ENCODE measurements at regions of chr1 and their contacts with region 1.

Region 1: GRCh38 chr1:42335050-42335808 is at the start of gene FOXJ3:
- DNase-seq: peak; percentile 96
- ATAC-seq: peak; percentile 93
- H3K4me3 ChIP-seq: peak within 1 kb of the TSS; percentile 93
- H3K27ac ChIP-seq: peak within 1 kb of the TSS; percentile 82
- H3K4me1 ChIP-seq: no peaks in the 10 kb centered on the region
- H3K27me3 ChIP-seq: no peaks in the 10 kb centered on the region
- CTCF ChIP-seq: 0 out of 2 replicates have a peak, but pooled peaks have one; percentile 2
- POLR2A ChIP-seq: peak; percentile 72
- RAD21 ChIP-seq: peak; percentile 21; the same call in 1 of the 2 replicates
- total RNA-seq, gene FOXJ3: 28.1 and 30.5 TPM in 2 replicates

Region 2: GRCh38 chr1:41573785-41574713 is 761.2 kb before region 1 on chr1:
- CTCF ChIA-PET with region 1: no interaction called
- POLR2A ChIA-PET with region 1: no interaction called
- dilution Hi-C with region 1: no loop called
- in situ Hi-C with region 1: no loop called
- intact Hi-C with region 1: loop called (anchors 5 kb)
- DNase-seq: peak; percentile 80
- ATAC-seq: peak; percentile 99
- H3K4me3 ChIP-seq: no peak overlapping the region
- H3K27ac ChIP-seq: no peak overlapping the region
- H3K4me1 ChIP-seq: no peaks in the 10 kb centered on the region
- H3K27me3 ChIP-seq: no peaks in the 10 kb centered on the region
- CTCF ChIP-seq: peak; percentile 99
- POLR2A ChIP-seq: peak; percentile 57; the same call in 1 of the 2 replicates
- RAD21 ChIP-seq: peak; percentile 100

Region 3: GRCh38 chr1:42173155-42173933 is 161.9 kb before region 1 on chr1:
- CTCF ChIA-PET with region 1: interaction called, 4 read pairs
- POLR2A ChIA-PET with region 1: no interaction called
- dilution Hi-C with region 1: no loop called
- in situ Hi-C with region 1: no loop called
- intact Hi-C with region 1: loop called (anchors 1 kb)
- DNase-seq: peak; percentile 28
- ATAC-seq: peak; percentile 76
- H3K4me3 ChIP-seq: no peak overlapping the region
- H3K27ac ChIP-seq: no peak overlapping the region
- H3K4me1 ChIP-seq: peaks cover 5% of the 10 kb centered on the region
- H3K27me3 ChIP-seq: no peaks in the 10 kb centered on the region
- CTCF ChIP-seq: peak; percentile 79
- POLR2A ChIP-seq: no peak
- RAD21 ChIP-seq: peak; percentile 61

Region 4: GRCh38 chr1:42189931-42190853 is 145.0 kb before region 1 on chr1:
- CTCF ChIA-PET with region 1: no interaction called
- POLR2A ChIA-PET with region 1: no interaction called
- dilution Hi-C with region 1: no loop called
- in situ Hi-C with region 1: no loop called
- intact Hi-C with region 1: loop called (anchors 5 kb)
- DNase-seq: peak; percentile 39
- ATAC-seq: no peak
- H3K4me3 ChIP-seq: no peak overlapping the region
- H3K27ac ChIP-seq: no peak overlapping the region
- H3K4me1 ChIP-seq: no peaks in the 10 kb centered on the region
- H3K27me3 ChIP-seq: no peaks in the 10 kb centered on the region
- CTCF ChIP-seq: no peak
- POLR2A ChIP-seq: no peak
- RAD21 ChIP-seq: no peak

Region 5: DNA sequence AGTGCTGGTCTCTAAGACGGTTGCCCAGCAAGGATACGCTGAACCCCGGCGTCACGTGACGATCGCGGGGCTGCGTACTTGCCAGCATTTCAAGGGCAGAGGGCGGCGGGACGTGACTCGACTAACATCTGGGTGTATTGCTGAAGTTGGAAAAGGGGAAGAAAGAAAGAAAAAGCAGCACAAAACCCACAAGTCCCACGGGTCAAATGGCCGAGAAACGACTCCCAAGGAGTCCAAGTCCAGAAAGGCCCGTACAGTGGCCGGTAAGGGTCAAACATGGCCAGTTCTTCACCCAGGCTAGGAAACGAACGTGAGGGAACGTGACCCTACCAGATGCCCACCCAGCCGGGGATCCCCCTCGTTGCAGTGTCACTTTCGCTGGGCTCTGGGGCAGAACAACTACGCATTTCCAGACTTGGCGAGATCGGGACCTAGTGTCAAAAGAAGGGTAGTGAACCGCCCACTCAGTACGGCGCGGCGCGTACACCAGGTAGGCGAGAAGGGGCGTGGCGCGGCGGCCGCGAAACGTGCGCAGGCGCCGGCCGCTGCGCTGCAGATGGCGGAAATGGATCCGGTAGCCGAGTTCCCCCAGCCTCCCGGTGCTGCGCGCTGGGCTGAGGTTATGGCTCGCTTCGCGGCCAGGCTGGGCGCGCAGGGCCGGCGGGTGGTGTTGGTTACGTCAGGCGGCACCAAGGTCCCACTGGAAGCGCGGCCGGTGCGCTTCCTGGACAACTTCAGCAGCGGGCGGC is 121.0 kb after region 1 on chr1 and contains the starts of genes PPCS and ZMYND12:
- CTCF ChIA-PET with region 1: no interaction called
- POLR2A ChIA-PET with region 1: no interaction called
- dilution Hi-C with region 1: no loop called
- in situ Hi-C with region 1: no loop called
- intact Hi-C with region 1: loop called (anchors 2 kb)
- DNase-seq: peak; percentile 76
- ATAC-seq: peak; percentile 93
- H3K4me3 ChIP-seq: peak within 1 kb of the TSS; percentile 68
- H3K27ac ChIP-seq: peak within 1 kb of the TSS; percentile 68
- H3K4me1 ChIP-seq: peaks cover 5% of the 10 kb centered on the region
- H3K27me3 ChIP-seq: no peaks in the 10 kb centered on the region
- CTCF ChIP-seq: no peak
- POLR2A ChIP-seq: peak; percentile 67; the same call in 1 of the 2 replicates
- RAD21 ChIP-seq: no peak
- total RNA-seq, gene PPCS: 8.2 and 13.6 TPM in 2 replicates
- total RNA-seq, gene ZMYND12: under 0.01 TPM in 1 of 2 replicates, not detected in the other

Region 6: GRCh38 chr1:42681741-42682483 is 346.7 kb after region 1 on chr1 and contains the start of gene YBX1:
- CTCF ChIA-PET with region 1: no interaction called
- POLR2A ChIA-PET with region 1: no interaction called
- dilution Hi-C with region 1: no loop called
- in situ Hi-C with region 1: no loop called
- intact Hi-C with region 1: loop called (anchors 5 kb)
- DNase-seq: peak; percentile 99
- ATAC-seq: peak; percentile 90
- H3K4me3 ChIP-seq: peak within 1 kb of the TSS; percentile 84
- H3K27ac ChIP-seq: peak within 1 kb of the TSS; percentile 82
- H3K4me1 ChIP-seq: peaks cover 13% of the 10 kb centered on the region; the same call in 1 of the 2 replicates
- H3K27me3 ChIP-seq: no peaks in the 10 kb centered on the region
- CTCF ChIP-seq: no peak
- POLR2A ChIP-seq: peak; percentile 73
- RAD21 ChIP-seq: no peak
- total RNA-seq, gene YBX1: 843 and 1,307 TPM in 2 replicates

Region 7: GRCh38 chr1:42766741-42767509 is 431.7 kb after region 1 on chr1 and contains the starts of genes C1orf50 and P3H1:
- CTCF ChIA-PET with region 1: no interaction called
- POLR2A ChIA-PET with region 1: no interaction called
- dilution Hi-C with region 1: no loop called
- in situ Hi-C with region 1: no loop called
- intact Hi-C with region 1: loop called (anchors 10 kb)
- DNase-seq: peak; percentile 98
- ATAC-seq: peak; percentile 92
- H3K4me3 ChIP-seq: peak within 1 kb of the TSS; percentile 77
- H3K27ac ChIP-seq: peak within 1 kb of the TSS; percentile 79
- H3K4me1 ChIP-seq: no peaks in the 10 kb centered on the region; the same call in 1 of the 2 replicates
- H3K27me3 ChIP-seq: no peaks in the 10 kb centered on the region
- CTCF ChIP-seq: no peak; the same call in 1 of the 2 replicates
- POLR2A ChIP-seq: peak; percentile 83
- RAD21 ChIP-seq: no peak
- total RNA-seq, gene C1orf50: 2.0 and 3.9 TPM in 2 replicates
- total RNA-seq, gene P3H1: 85.3 and 108 TPM in 2 replicates